K562 (cell line): ENCODE measurements at regions of chr18 and their contacts with region 1.

Region 1: GRCh38 chr18:57881818-57882413 is 78.8 kb upstream of the ATP8B1 start:
- DNase-seq: peak; percentile 33 to 74 (median 40)
- ATAC-seq: peak; percentile 93
- H3K4me3 ChIP-seq: no peak overlapping the region
- H3K27ac ChIP-seq: no peak overlapping the region
- H3K4me1 ChIP-seq: no peaks in the 10 kb centered on the region
- H3K27me3 ChIP-seq: no peaks in the 10 kb centered on the region
- CTCF ChIP-seq: peak; percentile 77 to 82 (median 81)
- EP300 ChIP-seq: no peak
- POLR2A ChIP-seq: no peak
- RAD21 ChIP-seq: peak; percentile 81 to 89

Region 2: DNA sequence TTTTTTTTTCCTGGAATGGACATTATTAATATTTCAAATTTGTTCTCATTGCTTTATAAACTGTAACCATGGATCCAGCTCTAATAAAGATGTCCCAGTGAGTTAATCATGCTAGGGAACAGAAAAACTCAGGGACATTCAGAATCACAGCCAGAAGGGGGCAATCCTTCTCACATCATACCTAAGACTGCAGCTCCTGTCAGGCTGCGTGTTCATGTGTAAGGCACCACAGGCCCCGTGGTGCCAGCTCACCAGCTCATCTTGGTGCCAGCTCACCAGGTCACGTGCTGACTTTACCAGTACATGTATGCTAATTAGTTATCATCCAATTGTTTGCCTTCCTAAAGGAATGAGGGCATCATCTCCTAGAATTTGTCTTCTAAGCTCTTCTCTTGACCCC is 77.4 kb after region 1 on chr18:
- CTCF ChIA-PET with region 1: no interaction called
- POLR2A ChIA-PET with region 1: no interaction called
- in situ Hi-C with region 1: no loop called
- intact Hi-C with region 1: loop called (anchors 10 kb)
- DNase-seq: peak in 2 of 4 experiments; percentile 31 to 50
- ATAC-seq: peak; percentile 84
- H3K4me3 ChIP-seq: no peak overlapping the region
- H3K27ac ChIP-seq: no peak overlapping the region
- H3K4me1 ChIP-seq: no peaks in the 10 kb centered on the region
- H3K27me3 ChIP-seq: peaks cover 0 to 13% of the 10 kb centered on the region in 2 experiments; a peak in 2 of 5 replicates
- CTCF ChIP-seq: peak; percentile 41 to 56 (median 47); a peak in 5 of 6 replicates
- EP300 ChIP-seq: no peak
- POLR2A ChIP-seq: no peak
- RAD21 ChIP-seq: peak; percentile 43 to 65

Region 3: DNA sequence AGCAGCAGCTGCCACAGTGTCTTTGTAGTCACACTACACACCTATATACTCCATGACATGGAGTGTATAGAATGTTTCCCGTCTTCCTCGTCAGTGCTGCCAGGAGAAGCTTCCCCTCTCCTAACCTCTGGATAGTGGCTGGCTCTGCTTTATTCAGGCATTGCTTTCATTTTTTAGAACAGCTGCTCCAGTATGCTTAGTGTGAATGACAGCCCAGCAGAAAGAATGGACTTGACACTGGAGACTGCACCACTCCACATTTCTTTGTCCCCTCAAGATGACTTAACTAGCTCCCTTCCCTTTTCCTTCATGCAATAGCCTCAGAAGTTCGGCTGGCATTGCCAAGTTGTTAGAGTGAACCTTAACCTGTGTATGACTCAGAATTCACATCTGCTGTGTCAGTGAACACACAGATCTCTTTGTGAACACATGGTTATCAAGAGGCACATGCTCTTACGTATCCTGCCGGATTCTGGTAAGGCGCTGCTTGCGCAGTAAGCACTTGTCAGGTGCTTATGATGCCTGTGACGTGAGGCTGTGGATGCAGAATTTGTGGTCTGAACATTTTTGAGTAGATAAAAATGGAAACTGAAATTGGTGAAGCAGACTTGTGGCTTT is 236.0 kb after region 1 on chr18:
- CTCF ChIA-PET with region 1: interaction called, 12 read pairs
- POLR2A ChIA-PET with region 1: interaction called, 3 read pairs
- in situ Hi-C with region 1: no loop called
- intact Hi-C with region 1: loop called (anchors 5 kb)
- DNase-seq: peak; percentile 68 to 83 (median 73)
- ATAC-seq: peak; percentile 87
- H3K4me3 ChIP-seq: no peak overlapping the region
- H3K27ac ChIP-seq: peak overlapping the region; percentile 27; the same call in 2 of the 3 replicates
- H3K4me1 ChIP-seq: peaks cover 3 to 14% of the 10 kb centered on the region in 2 experiments; a peak in 3 of 5 replicates
- H3K27me3 ChIP-seq: no peaks in the 10 kb centered on the region
- CTCF ChIP-seq: no peak
- EP300 ChIP-seq: peak; percentile 75
- POLR2A ChIP-seq: no peak
- RAD21 ChIP-seq: 0 out of 4 replicates have a peak, but pooled peaks of 1 of the 2 experiments have one; percentile 12

Region 4: DNA sequence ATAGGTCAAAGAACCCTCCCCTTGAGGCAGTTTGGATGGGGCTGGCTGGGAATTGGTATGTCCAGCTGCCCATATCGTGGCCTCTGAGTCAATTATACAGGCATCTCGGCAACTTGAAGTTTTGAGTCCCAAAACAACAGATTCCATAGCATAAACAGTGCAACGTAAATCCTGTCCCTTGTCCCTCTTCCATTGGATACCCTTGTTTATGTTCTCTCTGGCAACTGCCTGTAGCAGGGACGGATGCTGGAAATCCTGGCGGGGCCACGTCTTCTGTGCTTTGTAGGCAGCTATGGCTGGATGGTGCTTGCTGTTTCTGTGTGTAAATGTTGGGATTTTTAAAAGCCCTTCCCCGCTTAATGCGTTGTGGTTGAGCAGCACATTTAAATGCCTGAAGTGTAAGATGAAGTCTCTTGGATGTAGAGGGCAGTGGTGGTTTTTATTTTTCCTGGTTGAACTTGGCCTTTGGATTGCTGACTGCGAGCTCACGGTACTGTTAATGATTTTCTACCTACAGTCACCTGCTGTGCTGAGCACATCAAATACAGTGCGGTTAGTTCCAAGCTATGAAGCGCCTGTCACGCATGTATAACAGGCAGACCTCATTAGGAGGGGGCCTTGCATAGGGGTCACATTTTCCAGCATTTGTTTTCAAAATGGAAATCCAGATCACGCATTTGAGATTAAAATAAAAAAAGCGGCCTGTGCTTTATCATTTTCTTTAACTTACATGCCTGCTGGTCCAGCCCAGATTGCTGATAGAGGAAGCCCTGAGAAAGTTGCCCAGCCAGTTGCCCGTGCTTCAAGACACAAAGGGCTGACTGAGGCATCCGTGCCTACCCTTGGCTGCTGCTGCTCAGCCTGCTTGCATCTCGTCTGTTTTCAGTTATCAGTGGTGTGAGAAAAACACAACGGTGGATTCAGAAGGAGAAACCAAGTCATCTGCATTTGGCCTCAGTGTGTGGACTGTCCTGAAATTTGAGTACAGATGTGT is 246.8 kb after region 1 on chr18:
- CTCF ChIA-PET with region 1: no interaction called
- POLR2A ChIA-PET with region 1: no interaction called
- in situ Hi-C with region 1: loop called (anchors 25 kb)
- intact Hi-C with region 1: loop called (anchors 5 kb)
- DNase-seq: no peak
- ATAC-seq: no peak
- H3K4me3 ChIP-seq: no peak overlapping the region
- H3K27ac ChIP-seq: no peak overlapping the region
- H3K4me1 ChIP-seq: no peaks in the 10 kb centered on the region
- H3K27me3 ChIP-seq: no peaks in the 10 kb centered on the region
- CTCF ChIP-seq: no peak
- EP300 ChIP-seq: no peak
- POLR2A ChIP-seq: no peak
- RAD21 ChIP-seq: no peak

Region 5: GRCh38 chr18:58135701-58136331 is 253.9 kb after region 1 on chr18:
- CTCF ChIA-PET with region 1: interaction called, 5 read pairs
- POLR2A ChIA-PET with region 1: no interaction called
- in situ Hi-C with region 1: loop called (anchors 25 kb)
- intact Hi-C with region 1: loop called (anchors 5 kb)
- DNase-seq: peak; percentile 67 to 80 (median 75)
- ATAC-seq: peak; percentile 94
- H3K4me3 ChIP-seq: no peak overlapping the region
- H3K27ac ChIP-seq: no peak overlapping the region
- H3K4me1 ChIP-seq: peaks cover 0 to 6% of the 10 kb centered on the region in 2 experiments; a peak in 2 of 5 replicates
- H3K27me3 ChIP-seq: no peaks in the 10 kb centered on the region
- CTCF ChIP-seq: peak; percentile 80 to 93 (median 83)
- EP300 ChIP-seq: no peak
- POLR2A ChIP-seq: no peak
- RAD21 ChIP-seq: peak; percentile 61 to 65

Region 6: GRCh38 chr18:58180738-58181353 is 298.9 kb after region 1 on chr18:
- CTCF ChIA-PET with region 1: interaction called, 4 read pairs
- POLR2A ChIA-PET with region 1: no interaction called
- in situ Hi-C with region 1: no loop called
- intact Hi-C with region 1: loop called (anchors 2 kb)
- DNase-seq: peak; percentile 51 to 62 (median 57)
- ATAC-seq: peak; percentile 66
- H3K4me3 ChIP-seq: no peak overlapping the region
- H3K27ac ChIP-seq: no peak overlapping the region
- H3K4me1 ChIP-seq: peaks cover 0 to 6% of the 10 kb centered on the region in 2 experiments; a peak in 3 of 5 replicates
- H3K27me3 ChIP-seq: no peaks in the 10 kb centered on the region
- CTCF ChIP-seq: peak; percentile 54 to 77 (median 73)
- EP300 ChIP-seq: no peak
- POLR2A ChIP-seq: no peak
- RAD21 ChIP-seq: peak; percentile 59 to 75